CD4-positive, alpha-beta T cell (primary cell): ENCODE measurements at regions of chr1 and their contacts with region 1.

Region 1: DNA sequence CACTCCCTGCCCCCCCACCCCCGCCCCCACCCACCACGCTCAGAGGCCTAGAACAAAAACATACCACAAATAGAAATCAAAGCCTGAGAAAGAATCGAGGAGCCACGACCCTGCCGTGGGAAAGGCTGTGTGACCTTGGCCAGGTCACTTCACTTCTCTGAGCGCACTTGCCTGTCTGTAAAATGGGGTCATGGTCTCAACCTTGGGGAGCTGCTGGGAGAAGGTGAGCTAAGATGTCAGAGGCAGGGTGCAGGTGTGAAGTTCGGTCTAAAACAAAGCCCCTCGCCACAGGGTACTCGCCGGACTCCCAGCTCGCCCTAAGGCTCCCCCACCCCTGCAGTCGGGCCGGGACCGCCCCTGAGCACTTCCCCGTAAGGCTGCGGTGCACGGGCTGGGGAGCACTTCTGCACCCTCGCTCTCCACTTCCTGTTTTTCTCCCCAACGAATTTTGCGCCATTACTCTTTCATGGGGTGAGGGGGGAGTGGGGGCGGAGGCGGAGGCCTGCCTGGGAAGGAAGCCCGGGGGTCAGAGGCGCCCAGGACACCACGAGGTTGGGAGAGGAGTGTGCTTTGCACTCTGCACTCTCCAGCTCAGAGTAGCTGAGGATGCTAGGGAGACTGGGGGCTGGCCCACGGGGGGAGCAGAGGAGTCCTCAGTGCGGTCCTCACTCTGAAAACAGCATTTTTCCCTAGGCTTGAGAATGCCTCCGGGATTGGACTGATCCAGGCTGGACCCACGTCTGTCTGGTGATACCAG is 21.9 kb upstream of the PIK3CD start:
- DNase-seq: peak; percentile 41 to 91 (median 76)
- ATAC-seq: peak; percentile 52
- H3K4me3 ChIP-seq: peak overlapping the region; percentile 97
- H3K4me3 Mint-ChIP-seq: peak overlapping the region; percentile 98
- H3K27ac ChIP-seq: peak overlapping the region; percentile 72 to 84
- H3K27ac Mint-ChIP-seq: peak overlapping the region; percentile 92
- H3K4me1 ChIP-seq: peaks cover 77% of the 10 kb centered on the region
- H3K4me1 Mint-ChIP-seq: peaks cover 70% of the 10 kb centered on the region
- H3K27me3 ChIP-seq: no peaks in the 10 kb centered on the region
- H3K27me3 Mint-ChIP-seq: no peaks in the 10 kb centered on the region
- CTCF ChIP-seq: no peak

Region 2: GRCh38 chr1:9643351-9644256 is 14.0 kb after region 1 on chr1:
- CTCF ChIA-PET with region 1: interaction called, 9 read pairs
- POLR2A ChIA-PET with region 1: interaction called, 512 read pairs
- intact Hi-C with region 1: no loop called
- DNase-seq: peak in 4 of 14 experiments; percentile 30 to 41 (median 36)
- ATAC-seq: peak; percentile 46
- H3K4me3 ChIP-seq: no peak overlapping the region
- H3K4me3 Mint-ChIP-seq: peak overlapping the region; percentile 64
- H3K27ac ChIP-seq: peak overlapping the region; percentile 3 to 62
- H3K27ac Mint-ChIP-seq: peak overlapping the region; percentile 80
- H3K4me1 ChIP-seq: peaks cover 81% of the 10 kb centered on the region
- H3K4me1 Mint-ChIP-seq: peaks cover 75% of the 10 kb centered on the region
- H3K27me3 ChIP-seq: no peaks in the 10 kb centered on the region
- H3K27me3 Mint-ChIP-seq: no peaks in the 10 kb centered on the region
- CTCF ChIP-seq: no peak

Region 3: GRCh38 chr1:9671377-9672140 is 41.9 kb after region 1 on chr1:
- CTCF ChIA-PET with region 1: interaction called, 17 read pairs
- POLR2A ChIA-PET with region 1: interaction called, 10 read pairs
- intact Hi-C with region 1: no loop called
- DNase-seq: peak in 1 of 14 experiments; percentile 34
- ATAC-seq: peak; percentile 77
- H3K4me3 ChIP-seq: no peak overlapping the region
- H3K4me3 Mint-ChIP-seq: peak overlapping the region; percentile 7
- H3K27ac ChIP-seq: no peak overlapping the region
- H3K27ac Mint-ChIP-seq: peak overlapping the region; percentile 84
- H3K4me1 ChIP-seq: peaks cover 70% of the 10 kb centered on the region
- H3K4me1 Mint-ChIP-seq: peaks cover 62% of the 10 kb centered on the region
- H3K27me3 ChIP-seq: no peaks in the 10 kb centered on the region
- H3K27me3 Mint-ChIP-seq: no peaks in the 10 kb centered on the region
- CTCF ChIP-seq: no peak

Region 4: GRCh38 chr1:9711466-9712020 is 81.9 kb after region 1 on chr1:
- CTCF ChIA-PET with region 1: interaction called, 51 read pairs
- POLR2A ChIA-PET with region 1: interaction called, 157 read pairs
- intact Hi-C with region 1: loop called in 1 of 2 experiments (anchors 2 kb)
- DNase-seq: peak in 1 of 14 experiments; percentile 56
- ATAC-seq: no peak
- H3K4me3 ChIP-seq: no peak overlapping the region
- H3K4me3 Mint-ChIP-seq: no peak overlapping the region
- H3K27ac ChIP-seq: peak overlapping the region in 1 of 2 donors; percentile 31
- H3K27ac Mint-ChIP-seq: peak overlapping the region; percentile 71
- H3K4me1 ChIP-seq: peaks cover 79% of the 10 kb centered on the region
- H3K4me1 Mint-ChIP-seq: peaks cover 41% of the 10 kb centered on the region
- H3K27me3 ChIP-seq: no peaks in the 10 kb centered on the region
- H3K27me3 Mint-ChIP-seq: no peaks in the 10 kb centered on the region
- CTCF ChIP-seq: no peak

Region 5: DNA sequence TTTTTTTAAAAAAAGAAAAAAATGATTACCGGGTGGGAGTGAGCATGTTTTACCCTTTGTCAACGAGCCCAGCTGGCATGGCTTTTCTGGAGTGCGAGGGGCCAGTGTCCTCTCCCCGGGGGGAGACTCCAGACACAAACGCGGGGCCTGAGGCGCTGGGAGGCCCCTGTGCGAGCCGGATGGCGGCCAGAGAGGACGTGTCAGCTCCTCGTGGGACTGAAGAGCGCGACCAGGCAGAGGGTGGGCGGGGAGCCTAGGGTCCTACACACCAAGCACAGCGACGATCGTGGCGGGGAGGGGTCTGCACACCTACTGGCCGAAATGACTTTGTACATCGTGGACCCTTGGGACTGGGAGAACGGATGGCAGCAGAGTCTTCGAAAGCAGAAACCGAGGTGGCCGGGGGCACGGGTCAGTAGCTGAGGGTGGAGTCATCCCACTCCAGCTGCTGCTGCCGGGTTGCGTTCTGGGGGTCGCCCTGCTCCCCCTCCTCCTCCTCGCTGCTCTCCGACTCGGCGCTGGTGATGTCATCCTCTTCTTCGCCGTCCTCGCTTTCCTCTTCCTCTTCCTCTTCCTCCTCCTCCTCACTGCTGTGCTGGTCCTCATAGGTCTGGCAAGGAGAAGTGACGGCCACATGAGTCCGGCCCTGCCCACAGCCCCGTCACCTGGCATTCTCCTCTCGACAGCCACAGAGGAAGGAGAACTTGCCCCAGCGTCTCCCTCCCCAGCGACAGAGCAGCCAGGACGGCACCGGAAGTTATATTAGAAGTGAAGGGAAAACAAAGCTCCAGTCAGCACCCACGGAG is 100.7 kb after region 1 on chr1:
- CTCF ChIA-PET with region 1: interaction called, 24 read pairs
- POLR2A ChIA-PET with region 1: interaction called, 46 read pairs
- intact Hi-C with region 1: loop called (anchors 2 kb)
- DNase-seq: peak in 3 of 14 experiments; percentile 35 to 63 (median 61)
- ATAC-seq: no peak
- H3K4me3 ChIP-seq: no peak overlapping the region
- H3K4me3 Mint-ChIP-seq: peak overlapping the region; percentile 81
- H3K27ac ChIP-seq: no peak overlapping the region
- H3K27ac Mint-ChIP-seq: peak overlapping the region; percentile 89
- H3K4me1 ChIP-seq: peaks cover 66% of the 10 kb centered on the region
- H3K4me1 Mint-ChIP-seq: peaks cover 68% of the 10 kb centered on the region
- H3K27me3 ChIP-seq: no peaks in the 10 kb centered on the region
- H3K27me3 Mint-ChIP-seq: no peaks in the 10 kb centered on the region
- CTCF ChIP-seq: no peak

Region 6: GRCh38 chr1:10430216-10431069 is 800.8 kb after region 1 on chr1 and contains the start of gene CENPS:
- CTCF ChIA-PET with region 1: no interaction called
- POLR2A ChIA-PET with region 1: interaction called, 4 read pairs
- intact Hi-C with region 1: loop called in 1 of 2 experiments (anchors 5 kb)
- DNase-seq: peak; percentile 72 to 95 (median 90)
- ATAC-seq: peak; percentile 79
- H3K4me3 ChIP-seq: peak within 1 kb of the TSS; percentile 71
- H3K4me3 Mint-ChIP-seq: peak within 1 kb of the TSS; percentile 94
- H3K27ac ChIP-seq: peak within 1 kb of the TSS; percentile 65 to 68
- H3K27ac Mint-ChIP-seq: peak within 1 kb of the TSS; percentile 92
- H3K4me1 ChIP-seq: peaks cover 26% of the 10 kb centered on the region
- H3K4me1 Mint-ChIP-seq: peaks cover 23% of the 10 kb centered on the region
- H3K27me3 ChIP-seq: no peaks in the 10 kb centered on the region
- H3K27me3 Mint-ChIP-seq: no peaks in the 10 kb centered on the region
- CTCF ChIP-seq: peak; percentile 98
- total RNA-seq, gene CENPS: 3.7 to 4.0 TPM